ENCODE measurements at regions of chr12 and their contacts with region 1.

Region 1: DNA sequence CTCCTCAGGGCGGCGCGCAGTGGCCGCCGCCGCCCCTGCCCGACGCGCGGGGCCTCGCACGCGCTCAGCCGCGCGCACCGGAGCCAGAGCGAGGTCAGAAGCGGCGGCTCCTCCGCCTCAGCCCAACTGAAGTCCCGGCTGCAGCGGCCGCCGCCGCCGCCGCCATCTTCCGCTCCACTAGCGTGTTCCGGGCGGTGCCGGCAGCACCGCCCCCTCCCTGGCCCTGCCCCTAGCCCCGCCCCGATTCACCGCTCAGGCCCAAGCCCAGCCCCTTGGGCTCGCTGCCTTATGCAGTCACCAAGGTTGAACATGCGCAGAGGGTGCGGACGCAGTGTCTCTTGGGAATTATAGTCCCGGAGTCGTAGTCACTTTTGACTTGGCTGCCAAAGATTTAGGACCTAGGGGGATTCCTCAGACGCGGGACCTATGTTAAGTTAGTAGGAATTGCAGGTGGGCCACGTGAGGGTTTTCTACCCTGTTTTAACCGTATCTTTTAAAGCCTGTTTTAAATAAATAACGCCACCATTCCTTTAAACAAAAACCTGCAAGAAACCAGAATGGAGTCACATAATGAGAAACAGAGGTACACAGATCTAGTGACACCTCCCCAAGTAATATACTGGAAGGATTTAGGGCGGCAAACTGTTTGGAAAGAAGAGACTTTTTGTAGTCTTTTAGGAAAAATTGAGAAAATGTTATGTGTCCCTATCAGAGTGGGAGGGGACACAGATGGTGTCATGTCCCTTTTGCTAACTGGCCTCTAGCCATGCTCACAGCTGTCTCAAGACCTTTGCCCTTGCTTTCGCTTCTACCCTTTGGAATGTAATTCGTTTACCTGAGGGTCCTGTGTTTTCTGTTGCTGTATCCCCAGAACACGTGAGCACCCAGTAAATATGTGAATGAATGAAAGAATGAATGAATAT is at the start of gene PPTC7:
- DNase-seq: peak; percentile 99
- total RNA-seq, gene PPTC7: 21.5 to 34.5 TPM

Region 2: DNA sequence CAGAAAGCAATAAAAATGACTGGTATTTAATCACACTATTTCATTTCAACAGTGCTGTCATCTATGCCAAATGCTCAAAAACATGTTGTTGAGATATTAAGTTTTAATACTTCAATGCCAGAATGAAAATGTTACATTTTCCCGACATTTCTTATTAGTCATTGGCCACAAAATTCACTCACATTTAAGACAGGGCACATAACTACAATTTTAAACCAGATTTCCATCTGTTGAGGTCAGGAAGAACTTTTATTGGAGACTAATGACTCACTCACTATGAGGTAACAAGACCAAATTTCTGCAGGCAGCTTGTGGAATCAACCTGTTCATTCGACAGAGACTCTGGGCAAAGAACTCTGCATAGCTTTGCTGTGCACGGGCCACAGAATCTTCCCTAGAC is 37.1 kb before region 1 on chr12:
- intact Hi-C with region 1: loop called in 1 of 2 experiments (anchors 5 kb)
- DNase-seq: no peak

Region 3: GRCh38 chr12:110613771-110614684 is 30.6 kb after region 1 on chr12 and contains the start of gene TCTN1:
- intact Hi-C with region 1: loop called in 1 of 2 experiments (anchors 2 kb)
- DNase-seq: peak; percentile 99
- total RNA-seq, gene TCTN1: 24.0 to 35.8 TPM

Measured in posterior vena cava (tissue), 2 donors.